OCI-LY7 (cell line): ENCODE measurements at regions of chr1 and their contacts with region 1.

Region 1: GRCh38 chr1:225652729-225653462 is at the start of gene ENAH:
- DNase-seq: peak; percentile 70
- H3K4me3 ChIP-seq: peak within 1 kb of the TSS; percentile 86
- H3K27ac ChIP-seq: no peak within 1 kb of the TSS
- H3K4me1 ChIP-seq: peaks cover 20% of the 10 kb centered on the region
- CTCF ChIP-seq: no peak
- total RNA-seq, gene ENAH: 4.6 and 10.8 TPM in 2 replicates

Region 2: DNA sequence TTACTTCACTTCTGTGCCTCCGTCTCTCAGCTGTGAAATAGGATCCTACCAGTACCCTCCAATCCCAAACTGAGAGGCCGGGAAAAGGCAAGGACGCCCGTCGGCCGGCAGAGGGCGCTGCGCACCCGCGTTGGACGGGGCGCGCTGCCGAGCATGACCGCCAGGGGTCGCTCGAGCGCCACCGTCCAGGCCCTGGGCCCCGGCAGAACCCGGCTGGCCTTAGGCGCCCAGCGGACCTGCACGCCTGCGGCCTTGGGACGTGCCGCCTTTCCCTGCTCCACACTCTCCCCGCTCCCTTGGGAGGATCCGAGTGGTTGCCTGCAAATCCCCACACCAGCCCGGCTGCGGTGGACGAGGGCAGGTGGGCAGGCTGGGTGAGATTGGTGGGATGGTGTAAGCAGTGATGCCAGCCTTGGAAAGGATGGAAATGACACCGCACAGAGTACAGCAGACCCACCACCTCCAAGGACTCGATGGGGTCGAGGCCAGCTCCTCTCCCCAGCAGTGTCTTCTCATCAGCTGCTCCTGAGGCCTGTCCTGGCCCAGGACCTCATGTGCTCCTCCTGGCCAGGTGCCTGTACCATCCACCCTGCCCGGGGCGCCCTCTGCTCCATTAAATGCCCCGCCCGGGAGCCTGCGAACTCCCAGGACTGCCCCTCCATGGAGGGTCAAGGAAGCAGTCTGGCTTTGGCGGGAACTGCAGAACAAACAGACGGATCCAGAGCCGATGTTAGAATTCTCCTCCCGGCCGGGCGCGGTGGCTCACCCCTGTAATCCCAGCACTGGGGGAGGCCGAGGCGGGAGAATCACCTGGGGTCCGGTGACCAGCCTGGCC is 177.7 kb before region 1 on chr1:
- CTCF ChIA-PET with region 1: interaction called, 3 read pairs
- POLR2A ChIA-PET with region 1: interaction called, 3 read pairs
- intact Hi-C with region 1: loop called (anchors 1 kb)
- DNase-seq: peak; percentile 70
- H3K4me3 ChIP-seq: no peak overlapping the region
- H3K27ac ChIP-seq: no peak overlapping the region
- H3K4me1 ChIP-seq: peaks cover 56% of the 10 kb centered on the region
- CTCF ChIP-seq: peak; percentile 100

Region 3: GRCh38 chr1:225554216-225554812 is 98.6 kb before region 1 on chr1:
- CTCF ChIA-PET with region 1: no interaction called
- POLR2A ChIA-PET with region 1: interaction called, 4 read pairs
- intact Hi-C with region 1: loop called (anchors 2 kb)
- DNase-seq: peak; percentile 56
- H3K4me3 ChIP-seq: no peak overlapping the region
- H3K27ac ChIP-seq: no peak overlapping the region
- H3K4me1 ChIP-seq: no peaks in the 10 kb centered on the region
- CTCF ChIP-seq: peak; percentile 94

Region 4: GRCh38 chr1:225735252-225736149 is 82.6 kb after region 1 on chr1:
- CTCF ChIA-PET with region 1: no interaction called
- POLR2A ChIA-PET with region 1: no interaction called
- intact Hi-C with region 1: no loop called
- DNase-seq: no peak
- H3K4me3 ChIP-seq: no peak overlapping the region
- H3K27ac ChIP-seq: no peak overlapping the region
- H3K4me1 ChIP-seq: no peaks in the 10 kb centered on the region
- CTCF ChIP-seq: no peak

Region 5: DNA sequence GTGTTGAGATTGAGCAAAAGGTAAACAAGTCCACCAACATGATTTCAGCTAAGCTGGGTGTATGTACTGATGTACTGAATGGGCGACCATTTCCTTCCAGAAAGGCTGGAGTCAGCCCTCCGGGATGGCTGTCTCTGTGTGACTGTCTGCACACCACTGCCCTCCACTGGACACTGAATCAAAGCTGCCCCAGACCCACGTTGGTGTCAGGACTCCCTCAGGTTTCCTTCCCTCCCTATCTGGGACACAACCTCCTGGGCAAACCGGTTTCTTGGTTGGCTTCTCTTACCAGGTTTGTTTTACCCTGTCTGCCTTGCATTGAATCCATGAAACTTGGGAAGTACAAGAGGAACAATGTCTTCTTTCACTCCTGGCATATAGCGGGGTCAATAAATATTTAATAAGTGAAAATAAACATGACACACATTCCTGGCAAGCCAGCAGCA is 119.5 kb after region 1 on chr1:
- CTCF ChIA-PET with region 1: interaction called, 4 read pairs
- POLR2A ChIA-PET with region 1: interaction called, 4 read pairs
- intact Hi-C with region 1: loop called (anchors 1 kb)
- DNase-seq: peak; percentile 75
- H3K4me3 ChIP-seq: no peak overlapping the region
- H3K27ac ChIP-seq: no peak overlapping the region
- H3K4me1 ChIP-seq: peaks cover 52% of the 10 kb centered on the region
- CTCF ChIP-seq: peak; percentile 88

Region 6: GRCh38 chr1:225845571-225846259 is 192.8 kb after region 1 on chr1:
- CTCF ChIA-PET with region 1: no interaction called
- POLR2A ChIA-PET with region 1: no interaction called
- intact Hi-C with region 1: loop called (anchors 5 kb)
- DNase-seq: peak; percentile 74
- H3K4me3 ChIP-seq: no peak overlapping the region
- H3K27ac ChIP-seq: no peak overlapping the region
- H3K4me1 ChIP-seq: peaks cover 49% of the 10 kb centered on the region
- CTCF ChIP-seq: peak; percentile 83